Activated T-helper 1 cell treated with anti-CD3 and anti-CD28 coated beads, Interleukin-12 subunit alpha, Interleukin-12 subunit beta, Interleukin-2, Interleukin-4 antibody, amounts not matched to agents 30 ng/mL and 10 ng/mL and 1 ng/mL, durations not matched to agents 14 hours and 24 hours and 36 hours (primary cell): ENCODE measurements at regions of chr18 and their contacts with region 1.

Region 1: DNA sequence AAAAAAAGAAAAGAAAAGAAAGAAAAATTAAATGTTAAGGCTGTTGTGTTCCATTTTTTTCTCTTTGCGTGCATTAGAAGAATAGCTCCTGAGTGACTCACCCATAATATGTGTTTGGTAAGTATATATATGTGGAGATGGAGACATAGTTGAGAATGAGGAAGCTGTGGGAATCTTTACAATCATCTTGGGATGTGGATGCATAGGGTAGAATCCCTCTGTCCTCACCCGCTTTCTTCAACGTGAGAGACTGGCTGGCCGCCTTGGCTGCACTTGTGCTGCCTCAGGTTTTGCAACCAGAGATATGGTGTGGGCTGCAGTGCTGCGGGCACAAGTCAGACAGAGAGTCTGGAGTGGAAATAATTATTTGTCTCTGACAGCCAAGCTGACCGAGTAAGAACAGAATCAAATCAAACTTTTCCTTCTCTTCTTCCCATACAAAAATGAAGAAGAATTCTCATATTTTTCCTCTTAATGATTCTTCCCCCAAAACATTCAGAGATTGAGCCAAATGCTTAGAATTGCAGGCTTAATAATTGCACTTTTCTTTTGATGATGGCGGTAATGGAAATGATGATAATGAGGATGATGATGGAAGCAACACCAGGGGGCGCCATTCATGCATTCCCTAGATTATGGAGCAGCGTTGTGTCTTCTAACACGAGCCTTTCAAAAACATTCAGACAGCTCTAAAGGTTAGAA is 48.5 kb downstream of the SERPINB7 start:
- DNase-seq: peak; percentile 9
- H3K4me3 Mint-ChIP-seq: no peak overlapping the region
- H3K27ac Mint-ChIP-seq: no peak overlapping the region
- H3K4me1 Mint-ChIP-seq: no peaks in the 10 kb centered on the region
- H3K27me3 Mint-ChIP-seq: peaks cover 17% of the 10 kb centered on the region

Region 2: DNA sequence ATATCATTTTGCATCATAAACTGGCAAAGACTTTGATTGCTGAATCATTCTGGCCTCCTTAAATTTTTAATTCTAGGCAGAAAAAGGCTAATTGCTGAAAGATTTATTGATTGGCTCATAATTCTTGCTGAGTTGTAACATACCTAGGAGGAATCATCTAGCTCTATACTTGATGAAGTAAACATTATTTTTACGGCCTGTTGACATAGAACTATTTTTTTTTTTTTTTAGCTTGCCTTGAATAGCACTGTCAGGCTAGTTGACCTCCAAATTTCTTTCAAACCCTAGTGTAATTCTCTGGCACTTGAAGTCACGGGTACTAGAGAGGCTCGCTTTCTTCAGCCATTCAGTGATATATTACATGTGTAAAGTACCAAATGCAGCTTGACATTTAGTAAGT is 278.7 kb before region 1 on chr18:
- intact Hi-C with region 1: no loop called
- DNase-seq: no peak
- H3K4me3 Mint-ChIP-seq: no peak overlapping the region
- H3K27ac Mint-ChIP-seq: no peak overlapping the region
- H3K4me1 Mint-ChIP-seq: no peaks in the 10 kb centered on the region
- H3K27me3 Mint-ChIP-seq: peaks cover 21% of the 10 kb centered on the region

Region 3: DNA sequence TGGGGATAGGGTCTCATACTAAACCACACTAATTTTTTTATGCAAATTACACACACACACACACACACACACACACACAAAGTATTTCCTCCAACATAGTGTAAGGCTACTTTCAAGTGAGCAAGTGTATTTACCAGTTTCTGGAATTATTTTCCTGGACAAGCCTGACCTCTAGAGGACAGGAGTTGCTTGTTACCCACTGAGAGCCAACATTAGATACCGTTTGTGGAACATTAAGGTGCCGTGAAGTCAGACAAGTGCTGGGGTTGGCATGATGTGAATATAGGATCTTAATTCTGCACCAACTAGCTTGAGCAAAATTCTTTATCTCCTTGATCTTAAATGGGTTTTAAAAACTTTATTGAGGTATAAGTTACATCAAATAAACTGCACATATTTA is 24.5 kb after region 1 on chr18:
- intact Hi-C with region 1: loop called (anchors 1 kb)
- DNase-seq: no peak
- H3K4me3 Mint-ChIP-seq: no peak overlapping the region
- H3K27ac Mint-ChIP-seq: no peak overlapping the region
- H3K4me1 Mint-ChIP-seq: no peaks in the 10 kb centered on the region
- H3K27me3 Mint-ChIP-seq: peaks cover 12% of the 10 kb centered on the region